ENCODE measurements at regions of chr19 and their contacts with region 1.

Region 1: DNA sequence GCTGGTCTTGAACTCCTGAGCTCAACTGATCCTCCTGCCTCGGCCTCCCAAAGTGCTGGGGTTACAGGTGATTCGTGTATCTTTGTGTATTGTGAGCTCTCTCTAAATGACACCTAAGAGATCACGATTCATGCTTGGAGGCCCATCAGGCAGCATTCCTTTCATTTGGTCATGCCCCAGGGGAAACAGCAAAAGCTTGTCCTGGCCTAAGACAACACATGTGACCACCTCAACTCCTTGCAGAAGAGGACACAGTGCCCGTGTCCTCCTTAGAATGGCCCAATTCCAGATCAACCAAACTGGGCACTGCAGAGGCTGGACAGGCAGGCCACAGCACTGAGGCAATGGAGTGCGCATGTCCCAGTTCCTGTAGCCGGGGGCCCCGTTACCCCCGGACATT is 32.5 kb downstream of the ZC3H4 start:
- DNase-seq: no peak
- ATAC-seq: no peak
- H3K4me3 ChIP-seq: no peak overlapping the region
- H3K27ac ChIP-seq: no peak overlapping the region
- H3K4me1 ChIP-seq: peaks cover 8% of the 10 kb centered on the region
- CTCF ChIP-seq: no peak
- EP300 ChIP-seq: no peak
- POLR2A ChIP-seq: no peak
- RAD21 ChIP-seq: no peak

Region 2: DNA sequence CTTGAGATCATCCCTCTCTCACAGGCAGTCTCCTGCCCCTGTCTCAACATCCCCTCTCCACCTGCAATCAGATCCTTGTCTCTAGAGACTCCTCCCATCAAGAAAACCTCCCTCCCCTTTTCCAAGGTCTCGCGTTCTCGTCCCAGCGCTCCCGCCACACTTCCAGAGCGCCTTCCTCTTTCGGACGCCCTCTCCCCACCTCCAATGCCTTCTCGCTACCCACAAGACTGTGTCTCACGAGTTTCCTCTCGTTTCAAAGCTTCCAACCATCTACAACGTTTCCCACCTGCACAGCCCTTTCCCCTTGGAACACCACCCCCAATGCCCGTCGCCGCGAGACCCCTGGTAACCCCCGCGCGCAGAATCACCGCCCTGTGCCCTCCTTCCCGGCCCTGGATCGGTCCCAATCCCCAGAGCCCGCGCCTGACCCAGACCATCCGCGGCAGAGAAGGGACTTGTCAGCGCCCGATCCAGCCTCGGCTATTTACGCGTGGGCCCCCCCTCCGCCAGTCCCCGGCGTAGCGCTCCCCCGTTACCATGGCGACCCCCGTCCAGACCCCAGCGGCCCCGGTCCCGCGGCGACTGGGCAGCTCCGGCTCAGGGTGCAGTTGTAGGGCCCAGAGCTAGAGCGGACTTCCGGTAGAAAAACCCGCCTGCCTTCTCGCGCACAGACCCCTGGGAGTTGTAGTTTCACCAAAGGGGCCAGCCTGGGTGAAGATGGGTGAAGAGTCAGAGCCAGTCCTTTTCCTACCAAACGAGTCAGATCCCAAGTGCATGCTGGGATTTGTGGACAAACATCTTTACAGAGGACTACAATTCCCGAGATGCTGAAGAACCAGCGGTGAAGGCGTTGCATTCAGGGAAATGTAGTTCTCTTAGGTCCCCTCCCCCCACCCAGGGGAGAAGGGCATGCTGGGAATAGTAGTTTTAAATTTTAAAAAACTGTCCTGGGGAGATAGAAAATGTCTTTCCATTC is 230.6 kb before region 1 on chr19 and contains the start of gene AP2S1:
- CTCF ChIA-PET with region 1: no interaction called
- POLR2A ChIA-PET with region 1: no interaction called
- DNase-seq: peak; percentile 99
- ATAC-seq: peak; percentile 97 to 98
- H3K4me3 ChIP-seq: peak within 1 kb of the TSS; percentile 67
- H3K27ac ChIP-seq: peak within 1 kb of the TSS; percentile 81 to 93
- H3K4me1 ChIP-seq: peaks cover 10% of the 10 kb centered on the region
- CTCF ChIP-seq: no peak
- EP300 ChIP-seq: no peak
- POLR2A ChIP-seq: peak; percentile 79
- RAD21 ChIP-seq: 0 out of 5 replicates have a peak, but pooled peaks of 1 of the 2 experiments have one; percentile 5
- polyA plus RNA-seq, gene AP2S1: 117 and 150 TPM in 2 replicates

Region 3: DNA sequence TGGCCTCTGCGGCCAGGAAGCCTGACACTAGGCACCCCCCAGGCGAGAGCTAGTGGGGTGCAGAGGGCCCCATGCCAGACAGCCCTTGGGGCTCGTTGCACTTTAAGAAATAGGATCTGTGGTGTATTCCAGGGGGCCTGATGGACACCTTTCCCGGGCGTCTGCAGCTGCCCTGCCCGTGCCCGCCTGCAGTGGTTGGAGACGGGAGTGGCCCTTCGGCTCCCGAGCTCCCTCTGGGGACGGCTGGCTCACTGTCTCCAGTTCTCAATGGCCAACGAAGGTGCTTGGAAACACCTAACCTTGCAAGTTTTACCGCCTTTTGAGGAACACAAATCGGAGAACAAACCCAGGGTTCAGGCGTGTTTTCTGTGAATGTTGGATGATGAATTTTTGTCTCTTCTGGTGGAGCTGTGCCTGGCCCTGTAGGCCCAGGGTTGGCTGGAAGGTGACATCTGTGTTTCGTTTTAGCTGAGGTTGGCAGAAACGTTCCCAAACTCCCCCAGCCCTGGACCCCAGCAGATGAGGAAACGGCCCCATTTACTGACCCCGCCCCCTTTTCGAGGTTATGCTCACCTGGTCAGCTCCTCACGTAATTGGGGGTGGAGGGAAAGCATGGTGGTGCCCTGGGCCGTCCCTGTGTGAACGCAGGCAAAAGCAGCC is 78.9 kb before region 1 on chr19:
- CTCF ChIA-PET with region 1: no interaction called
- POLR2A ChIA-PET with region 1: no interaction called
- DNase-seq: peak in 1 of 2 experiments; percentile 60
- ATAC-seq: peak; percentile 70 to 87
- H3K4me3 ChIP-seq: no peak overlapping the region
- H3K27ac ChIP-seq: no peak overlapping the region
- H3K4me1 ChIP-seq: peaks cover 4% of the 10 kb centered on the region; the same call in 1 of the 3 replicates
- CTCF ChIP-seq: peak; percentile 49
- EP300 ChIP-seq: no peak
- POLR2A ChIP-seq: no peak
- RAD21 ChIP-seq: peak; percentile 61 to 66

Region 4: GRCh38 chr19:47130591-47131227 is 49.6 kb after region 1 on chr19 and contains the start of gene SAE1:
- CTCF ChIA-PET with region 1: interaction called, 72 read pairs
- POLR2A ChIA-PET with region 1: interaction called, 4 read pairs
- DNase-seq: peak; percentile 100
- ATAC-seq: peak; percentile 91 to 92
- H3K4me3 ChIP-seq: peak within 1 kb of the TSS; percentile 71
- H3K27ac ChIP-seq: peak within 1 kb of the TSS; percentile 92 to 93
- H3K4me1 ChIP-seq: peaks cover 35% of the 10 kb centered on the region
- CTCF ChIP-seq: peak; percentile 50
- EP300 ChIP-seq: no peak
- POLR2A ChIP-seq: peak; percentile 90
- RAD21 ChIP-seq: peak in 1 of 2 experiments; percentile 53; a peak in 2 of 5 replicates
- polyA plus RNA-seq, gene SAE1: 229 and 249 TPM in 2 replicates

Measured in A549 (cell line).